PC-9 (cell line): ENCODE measurements at regions of chr4 and their contacts with region 1.

Region 1: DNA sequence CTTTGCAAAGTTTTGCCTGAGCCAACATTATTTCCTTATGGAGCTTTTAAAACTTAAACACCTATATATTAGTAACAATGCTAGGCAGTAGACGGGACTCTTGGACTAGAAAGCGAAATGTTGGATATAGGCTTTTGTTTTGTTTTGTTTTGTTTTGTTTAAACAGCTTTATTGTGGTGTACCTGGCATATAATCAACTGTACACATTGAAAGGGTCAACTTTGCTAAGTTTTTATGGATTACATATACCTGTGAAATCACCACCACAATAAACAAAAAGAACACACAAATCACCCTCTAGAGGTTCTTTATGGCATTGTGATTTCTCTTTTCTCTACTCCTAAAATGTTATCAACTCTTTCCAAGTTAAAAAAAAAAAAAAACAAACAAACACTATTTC is 184.9 kb upstream of the LNX1 start:
- DNase-seq: no peak
- H3K4me3 ChIP-seq: no peak overlapping the region
- H3K27ac ChIP-seq: no peak overlapping the region
- H3K4me1 ChIP-seq: no peaks in the 10 kb centered on the region
- H3K27me3 ChIP-seq: no peaks in the 10 kb centered on the region
- CTCF ChIP-seq: no peak

Region 2: DNA sequence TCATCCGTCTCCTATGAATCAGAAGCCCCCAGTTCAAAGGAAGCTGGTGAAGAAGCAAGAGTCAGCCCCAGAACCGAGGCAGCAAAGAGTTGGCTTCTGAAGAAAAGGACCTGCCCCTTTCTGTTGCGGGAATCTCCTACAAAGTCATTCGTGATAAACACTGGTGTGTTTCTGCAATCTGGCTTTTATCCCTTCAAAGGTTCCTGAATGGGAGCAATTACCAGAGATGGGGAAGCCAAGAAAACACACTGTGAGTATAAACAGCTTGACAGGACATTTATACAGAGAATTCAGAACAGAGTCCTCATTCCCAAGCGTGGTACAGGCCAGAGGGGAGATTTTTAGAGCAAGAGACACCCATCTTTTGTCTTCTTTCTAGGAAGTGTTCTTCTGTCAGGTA is 42.0 kb after region 1 on chr4:
- CTCF ChIA-PET with region 1: interaction called, 11 read pairs
- POLR2A ChIA-PET with region 1: no interaction called
- intact Hi-C with region 1: no loop called
- DNase-seq: no peak
- H3K4me3 ChIP-seq: no peak overlapping the region
- H3K27ac ChIP-seq: no peak overlapping the region
- H3K4me1 ChIP-seq: no peaks in the 10 kb centered on the region
- H3K27me3 ChIP-seq: no peaks in the 10 kb centered on the region
- CTCF ChIP-seq: no peak

Region 3: DNA sequence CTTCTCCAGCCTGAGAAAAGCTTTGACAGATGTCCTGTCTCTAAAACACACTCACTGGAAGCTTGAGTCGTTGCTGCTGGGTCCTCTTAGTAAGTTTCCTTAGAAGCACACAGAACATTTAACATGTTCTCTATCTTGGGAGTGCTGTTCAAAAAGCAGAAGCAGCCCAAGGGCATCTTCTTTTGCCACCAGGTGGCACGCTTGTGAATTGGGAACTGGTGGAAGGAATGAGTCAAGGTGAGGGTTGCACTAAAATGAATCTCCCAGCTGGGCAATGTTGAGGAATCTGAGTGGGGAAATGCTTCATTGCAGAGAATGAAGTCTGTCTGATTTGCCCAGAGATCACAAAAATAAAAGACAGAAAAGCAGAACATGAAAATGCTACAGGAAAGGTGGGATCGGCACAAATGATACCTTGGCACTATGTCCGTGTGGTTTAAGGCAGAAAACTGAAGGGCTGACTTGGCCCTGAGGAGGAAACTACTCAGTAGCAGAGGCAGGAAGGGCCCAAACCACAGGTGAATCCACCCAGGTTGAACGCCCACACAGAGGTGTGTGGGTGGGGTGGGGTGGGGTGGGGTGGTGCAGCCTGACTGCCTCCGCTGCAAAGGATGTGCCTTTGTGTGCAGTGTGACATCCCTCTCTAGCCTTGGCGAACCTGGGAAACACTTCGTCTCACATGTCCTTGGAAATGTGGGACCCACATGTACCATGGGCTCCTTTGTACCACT is 907.6 kb after region 1 on chr4:
- CTCF ChIA-PET with region 1: no interaction called
- POLR2A ChIA-PET with region 1: no interaction called
- intact Hi-C with region 1: no loop called
- DNase-seq: peak in 1 of 2 experiments; percentile 7
- H3K4me3 ChIP-seq: no peak overlapping the region
- H3K27ac ChIP-seq: no peak overlapping the region
- H3K4me1 ChIP-seq: no peaks in the 10 kb centered on the region
- H3K27me3 ChIP-seq: no peaks in the 10 kb centered on the region
- CTCF ChIP-seq: peak; percentile 55